Head of caudate nucleus (tissue), 42 donors: ENCODE measurements at regions of chr5 and their contacts with region 1.

Region 1: DNA sequence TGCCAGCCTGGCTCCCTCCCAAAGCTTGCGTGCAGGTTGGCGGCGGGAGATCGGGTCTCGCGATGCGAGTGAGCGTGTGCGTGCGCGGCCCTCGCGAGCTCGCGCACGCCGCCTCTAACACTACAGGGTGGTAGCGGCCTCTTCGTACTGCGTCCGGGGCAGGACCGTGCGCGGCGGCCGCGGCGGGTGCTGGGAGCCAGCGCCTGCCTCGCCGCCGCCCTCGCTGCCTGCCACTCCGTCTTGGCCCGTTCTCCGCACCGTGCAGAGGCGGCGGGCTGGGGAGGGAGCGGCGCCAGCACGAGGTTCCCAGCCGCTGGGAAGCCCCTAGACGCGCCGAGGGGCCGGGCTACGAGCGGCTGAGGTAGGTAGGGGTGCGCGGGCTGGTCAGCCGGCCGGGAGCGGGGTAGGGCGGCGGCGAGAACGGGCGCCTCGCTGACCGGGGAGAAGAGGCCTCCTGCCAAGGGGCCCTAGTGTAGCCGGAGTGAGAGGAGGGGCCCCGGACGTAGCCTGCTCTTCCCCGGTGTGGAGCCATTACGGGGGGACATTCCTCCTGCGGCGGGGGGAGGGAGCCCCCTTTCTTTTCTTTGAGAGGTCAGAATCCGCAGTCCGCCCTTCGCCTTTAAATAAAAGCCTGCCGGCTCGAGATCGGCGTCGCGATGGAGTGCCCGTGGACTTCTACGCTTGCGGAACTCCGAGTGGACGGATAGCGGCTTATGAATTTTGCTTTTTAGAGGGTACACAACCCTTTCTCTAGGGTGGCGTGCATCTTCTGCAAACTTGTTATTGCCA is at the start of gene C5orf24:
- DNase-seq: peak; percentile 89 to 98 (median 96)

Region 2: DNA sequence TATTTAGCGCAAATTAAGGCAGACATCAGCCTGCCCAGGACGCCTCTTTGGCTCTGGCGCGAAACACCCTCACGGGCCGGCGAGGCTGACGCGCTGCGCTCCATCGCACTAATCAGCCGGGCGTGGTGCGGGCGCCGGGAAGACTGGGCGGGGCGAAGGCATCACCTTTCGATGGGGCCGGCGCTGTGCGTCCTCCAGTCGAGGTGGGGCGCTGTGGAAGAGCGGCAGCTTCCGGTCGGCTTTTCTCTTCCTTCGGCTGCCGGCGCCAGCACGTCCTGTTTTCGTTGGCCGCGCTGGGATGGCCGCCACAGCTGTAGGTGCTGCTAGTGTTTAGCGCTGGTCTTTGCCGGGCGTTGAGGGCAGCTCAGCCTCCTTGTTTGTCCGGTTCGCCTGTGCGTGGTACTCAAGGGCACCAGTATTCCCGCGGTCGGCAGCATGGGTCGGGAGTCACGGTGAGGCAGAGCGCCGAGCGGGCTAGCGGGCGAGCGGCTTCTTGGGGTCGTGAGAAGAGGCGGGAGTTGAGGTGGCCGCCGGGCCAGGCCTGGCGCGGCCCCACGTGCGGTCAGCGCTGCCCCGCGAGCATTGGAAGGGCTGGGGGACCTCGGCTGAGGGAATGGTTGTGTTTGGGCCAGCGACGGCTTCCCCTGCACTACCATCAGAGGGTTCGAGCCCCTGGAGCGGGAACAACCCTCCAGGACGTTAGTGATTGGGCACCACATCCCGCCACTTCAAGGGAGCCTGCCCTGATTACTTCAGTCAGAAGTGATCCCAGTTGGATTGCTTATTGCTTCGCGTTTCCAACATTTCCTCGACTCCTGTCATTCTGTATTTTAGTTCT is 87.3 kb before region 1 on chr5 and contains the start of gene DDX46:
- intact Hi-C with region 1: loop called (anchors 10 kb)
- DNase-seq: peak; percentile 81 to 97 (median 93)

Region 3: GRCh38 chr5:134784241-134784920 is 61.7 kb before region 1 on chr5:
- intact Hi-C with region 1: no loop called
- DNase-seq: no peak

Region 4: GRCh38 chr5:134873987-134874830 is 28.2 kb after region 1 on chr5 and contains the start of gene TXNDC15:
- intact Hi-C with region 1: loop called (anchors 2 kb)
- DNase-seq: peak; percentile 69 to 95 (median 89)

Region 5: DNA sequence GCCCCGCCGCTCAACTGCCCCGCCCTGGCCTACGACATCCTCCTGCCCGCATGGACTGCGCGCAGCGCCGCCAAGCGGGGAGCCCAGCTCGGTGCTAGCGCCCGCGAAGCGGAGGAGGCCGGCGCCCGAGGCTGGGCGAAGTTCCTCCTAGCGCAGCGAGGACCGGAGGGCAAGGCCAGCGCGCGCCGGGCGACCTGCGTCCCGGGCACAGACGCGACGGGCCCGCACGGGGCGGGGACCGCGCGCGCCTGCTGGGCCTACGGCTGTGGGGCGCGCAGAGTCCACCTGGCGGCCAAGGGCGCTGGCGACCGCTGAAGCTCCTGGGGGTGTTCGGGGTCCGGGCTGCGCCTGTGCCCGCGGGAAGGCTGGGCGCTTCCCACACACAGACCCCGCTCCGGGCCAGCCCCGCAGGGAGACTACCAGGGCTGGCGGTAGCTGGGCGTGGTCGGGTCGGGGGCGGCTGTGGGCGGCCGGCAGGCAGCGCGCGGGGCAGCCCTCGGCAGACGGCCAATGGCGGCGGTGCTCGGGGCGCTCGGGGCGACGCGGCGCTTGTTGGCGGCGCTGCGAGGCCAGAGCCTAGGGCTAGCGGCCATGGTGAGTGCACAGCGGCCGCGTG is 58.7 kb after region 1 on chr5 and contains the start of gene PCBD2:
- intact Hi-C with region 1: loop called (anchors 5 kb)
- DNase-seq: peak; percentile 66 to 95 (median 90)